Activated B cell treated with CpG ODN at 0.5 μM for 24 hours (primary cell): ENCODE measurements at regions of chr6 and their contacts with region 1.

Region 1: GRCh38 chr6:149316798-149317655 is 485 bp upstream of the TAB2 start:
- DNase-seq: peak; percentile 79
- ATAC-seq: peak; percentile 80
- H3K4me3 Mint-ChIP-seq: peak overlapping the region; percentile 93
- H3K27ac Mint-ChIP-seq: peak overlapping the region; percentile 87
- H3K4me1 Mint-ChIP-seq: peaks cover 37% of the 10 kb centered on the region
- H3K27me3 Mint-ChIP-seq: no peaks in the 10 kb centered on the region
- CTCF ChIP-seq: no peak

Region 2: GRCh38 chr6:148693882-148694484 is 623.0 kb before region 1 on chr6:
- CTCF ChIA-PET with region 1: no interaction called
- POLR2A ChIA-PET with region 1: no interaction called
- intact Hi-C with region 1: loop called (anchors 1 kb)
- DNase-seq: peak; percentile 33
- ATAC-seq: peak; percentile 98
- H3K4me3 Mint-ChIP-seq: peak overlapping the region; percentile 62
- H3K27ac Mint-ChIP-seq: peak overlapping the region; percentile 90
- H3K4me1 Mint-ChIP-seq: peaks cover 27% of the 10 kb centered on the region
- H3K27me3 Mint-ChIP-seq: no peaks in the 10 kb centered on the region
- CTCF ChIP-seq: no peak

Region 3: DNA sequence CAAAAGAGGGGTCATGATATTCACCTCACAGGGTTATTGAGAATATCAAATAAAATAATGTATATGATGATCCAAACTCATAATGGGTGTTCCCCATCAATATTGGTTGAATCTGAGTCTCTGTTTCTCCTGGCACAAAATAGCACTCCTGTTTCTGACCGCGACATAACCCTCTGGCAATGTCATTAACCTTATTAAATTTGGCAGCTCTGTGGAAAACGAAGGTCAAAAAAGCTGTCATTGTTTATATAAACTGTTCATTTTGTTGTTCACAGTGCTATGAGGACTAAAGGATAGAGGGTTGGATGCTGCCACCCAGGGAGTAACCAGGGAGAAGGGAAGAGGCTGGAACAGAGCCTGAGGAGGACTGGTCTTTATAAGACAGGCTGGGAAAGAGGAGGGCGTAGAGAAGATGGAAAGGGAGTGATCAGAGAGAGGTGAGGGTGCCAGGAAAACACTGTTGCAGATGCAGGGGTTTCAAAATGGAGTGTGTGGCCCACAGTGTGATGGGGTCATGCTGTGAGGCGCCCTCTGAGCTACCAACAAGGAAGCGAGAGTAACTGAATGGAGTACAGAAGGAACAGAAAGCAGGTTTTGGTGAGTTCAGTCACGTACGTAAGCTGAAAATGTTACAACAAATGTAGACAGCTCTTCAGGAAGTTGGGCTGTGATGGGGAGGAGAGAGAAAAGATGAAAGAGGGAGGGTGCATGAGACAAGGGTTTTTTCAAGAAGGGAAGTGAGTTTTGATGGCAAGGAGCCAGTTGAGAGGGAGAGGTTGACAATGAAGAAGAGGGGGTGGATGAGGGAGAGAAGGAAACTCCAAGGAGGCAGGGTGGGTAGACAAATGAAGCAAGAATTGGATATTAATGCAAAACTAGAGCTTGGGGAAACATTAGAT is 251.1 kb before region 1 on chr6:
- CTCF ChIA-PET with region 1: no interaction called
- POLR2A ChIA-PET with region 1: interaction called, 10 read pairs
- intact Hi-C with region 1: no loop called
- DNase-seq: no peak
- ATAC-seq: peak; percentile 97
- H3K4me3 Mint-ChIP-seq: peak overlapping the region; percentile 8
- H3K27ac Mint-ChIP-seq: peak overlapping the region; percentile 84
- H3K4me1 Mint-ChIP-seq: peaks cover 43% of the 10 kb centered on the region
- H3K27me3 Mint-ChIP-seq: no peaks in the 10 kb centered on the region
- CTCF ChIP-seq: no peak

Region 4: GRCh38 chr6:149190224-149190831 is 126.7 kb before region 1 on chr6:
- CTCF ChIA-PET with region 1: interaction called, 9 read pairs
- POLR2A ChIA-PET with region 1: interaction called, 12 read pairs
- intact Hi-C with region 1: loop called (anchors 1 kb)
- DNase-seq: peak; percentile 56
- ATAC-seq: peak; percentile 82
- H3K4me3 Mint-ChIP-seq: no peak overlapping the region
- H3K27ac Mint-ChIP-seq: no peak overlapping the region
- H3K4me1 Mint-ChIP-seq: peaks cover 9% of the 10 kb centered on the region
- H3K27me3 Mint-ChIP-seq: no peaks in the 10 kb centered on the region
- CTCF ChIP-seq: no peak

Region 5: GRCh38 chr6:149271348-149272340 is 45.4 kb before region 1 on chr6:
- CTCF ChIA-PET with region 1: no interaction called
- POLR2A ChIA-PET with region 1: interaction called, 29 read pairs
- intact Hi-C with region 1: loop called (anchors 1 kb)
- DNase-seq: peak; percentile 31
- ATAC-seq: peak; percentile 90
- H3K4me3 Mint-ChIP-seq: peak overlapping the region; percentile 78
- H3K27ac Mint-ChIP-seq: peak overlapping the region; percentile 98
- H3K4me1 Mint-ChIP-seq: peaks cover 60% of the 10 kb centered on the region
- H3K27me3 Mint-ChIP-seq: no peaks in the 10 kb centered on the region
- CTCF ChIP-seq: no peak

Region 6: DNA sequence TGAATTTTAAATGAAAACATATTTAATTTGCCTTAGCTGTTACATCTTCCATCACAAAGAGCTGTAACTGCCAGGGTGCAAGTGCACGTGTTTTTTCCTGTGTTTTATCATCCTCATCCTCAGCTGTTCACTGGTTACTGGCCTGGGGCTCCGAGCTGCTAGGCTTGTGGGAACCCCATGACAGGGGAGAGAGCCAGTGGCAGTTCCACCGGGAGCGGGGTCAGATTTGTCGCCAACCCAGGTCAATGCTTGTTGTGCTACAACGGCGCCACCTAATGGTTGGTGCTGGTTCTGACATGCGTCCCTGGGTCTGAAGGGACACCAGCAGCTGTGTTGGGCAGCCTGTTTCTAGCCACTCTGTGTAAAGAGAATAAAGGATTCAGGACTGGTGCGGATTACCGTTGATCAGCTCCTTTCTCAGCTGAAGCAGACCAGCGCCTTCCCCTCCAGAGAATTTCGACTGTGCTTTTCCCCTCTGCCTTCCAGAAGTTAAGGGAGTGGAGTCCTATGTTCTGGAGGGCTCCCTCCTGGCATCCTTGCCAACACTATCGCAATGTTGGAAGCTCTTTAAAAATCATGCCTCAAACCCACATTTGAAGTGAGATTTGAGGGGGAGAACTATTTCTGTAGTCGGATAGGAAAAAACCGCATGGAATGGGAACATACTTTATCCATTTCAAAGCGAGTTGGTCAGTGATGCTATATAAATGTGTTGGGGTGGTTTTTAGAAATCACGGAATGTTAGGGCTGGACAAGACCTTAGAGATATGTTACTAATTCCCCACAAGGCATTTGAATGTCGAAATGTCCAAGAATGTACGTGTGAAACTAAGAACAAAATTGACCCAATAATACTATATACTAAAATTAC is 115.1 kb after region 1 on chr6:
- CTCF ChIA-PET with region 1: interaction called, 7 read pairs
- POLR2A ChIA-PET with region 1: interaction called, 3 read pairs
- intact Hi-C with region 1: loop called (anchors 2 kb)
- DNase-seq: peak; percentile 77
- ATAC-seq: peak; percentile 96
- H3K4me3 Mint-ChIP-seq: peak overlapping the region; percentile 44
- H3K27ac Mint-ChIP-seq: no peak overlapping the region
- H3K4me1 Mint-ChIP-seq: peaks cover 4% of the 10 kb centered on the region
- H3K27me3 Mint-ChIP-seq: no peaks in the 10 kb centered on the region
- CTCF ChIP-seq: no peak

Region 7: DNA sequence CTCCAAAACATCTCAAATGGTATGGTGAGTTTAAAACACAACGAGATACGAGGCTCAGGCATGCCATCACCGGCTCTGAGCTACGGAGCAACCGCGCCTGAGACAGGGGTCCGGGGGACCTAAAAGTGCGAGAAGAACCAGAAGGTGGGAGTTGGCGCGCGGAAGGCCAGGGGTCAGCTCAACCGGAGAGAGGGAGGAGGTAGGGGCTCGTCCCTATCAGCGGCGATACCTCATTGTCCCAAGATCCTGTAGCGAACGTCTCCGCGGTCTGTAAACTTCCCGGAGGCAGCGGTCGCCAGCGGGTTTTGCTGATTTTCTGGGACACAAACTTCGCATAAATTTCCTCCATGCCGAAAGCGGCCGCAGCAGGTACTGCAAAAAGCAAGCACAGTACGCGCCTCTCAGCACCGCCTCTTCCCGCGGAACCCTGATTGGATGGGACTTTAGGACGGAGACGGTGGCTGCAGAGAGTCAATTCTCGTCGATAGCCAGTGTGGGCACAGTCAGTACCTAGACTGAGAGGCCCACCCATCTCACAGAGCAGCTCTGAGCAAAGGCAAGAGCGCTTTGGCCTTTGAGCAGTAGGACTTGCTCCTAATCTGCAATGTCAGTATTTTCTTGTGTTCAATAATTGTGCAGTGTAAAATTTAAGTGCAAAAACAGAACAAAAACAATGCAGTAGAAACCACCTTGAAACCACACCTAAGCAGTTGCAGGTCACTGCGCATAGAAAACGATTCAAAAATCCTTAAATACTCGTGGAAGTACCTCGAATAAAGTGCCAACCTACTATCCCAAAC is 429.3 kb after region 1 on chr6 and contains the start of gene NUP43:
- CTCF ChIA-PET with region 1: no interaction called
- POLR2A ChIA-PET with region 1: no interaction called
- intact Hi-C with region 1: loop called (anchors 5 kb)
- DNase-seq: peak; percentile 80
- ATAC-seq: peak; percentile 69
- H3K4me3 Mint-ChIP-seq: peak within 1 kb of the TSS; percentile 97
- H3K27ac Mint-ChIP-seq: peak within 1 kb of the TSS; percentile 89
- H3K4me1 Mint-ChIP-seq: peaks cover 29% of the 10 kb centered on the region
- H3K27me3 Mint-ChIP-seq: no peaks in the 10 kb centered on the region
- CTCF ChIP-seq: no peak
- total RNA-seq, gene NUP43: 46.9 and 50.4 TPM in 2 replicates